Thyroid gland (tissue), 4 donors: ENCODE measurements at regions of chrX and their contacts with region 1.

Region 1: DNA sequence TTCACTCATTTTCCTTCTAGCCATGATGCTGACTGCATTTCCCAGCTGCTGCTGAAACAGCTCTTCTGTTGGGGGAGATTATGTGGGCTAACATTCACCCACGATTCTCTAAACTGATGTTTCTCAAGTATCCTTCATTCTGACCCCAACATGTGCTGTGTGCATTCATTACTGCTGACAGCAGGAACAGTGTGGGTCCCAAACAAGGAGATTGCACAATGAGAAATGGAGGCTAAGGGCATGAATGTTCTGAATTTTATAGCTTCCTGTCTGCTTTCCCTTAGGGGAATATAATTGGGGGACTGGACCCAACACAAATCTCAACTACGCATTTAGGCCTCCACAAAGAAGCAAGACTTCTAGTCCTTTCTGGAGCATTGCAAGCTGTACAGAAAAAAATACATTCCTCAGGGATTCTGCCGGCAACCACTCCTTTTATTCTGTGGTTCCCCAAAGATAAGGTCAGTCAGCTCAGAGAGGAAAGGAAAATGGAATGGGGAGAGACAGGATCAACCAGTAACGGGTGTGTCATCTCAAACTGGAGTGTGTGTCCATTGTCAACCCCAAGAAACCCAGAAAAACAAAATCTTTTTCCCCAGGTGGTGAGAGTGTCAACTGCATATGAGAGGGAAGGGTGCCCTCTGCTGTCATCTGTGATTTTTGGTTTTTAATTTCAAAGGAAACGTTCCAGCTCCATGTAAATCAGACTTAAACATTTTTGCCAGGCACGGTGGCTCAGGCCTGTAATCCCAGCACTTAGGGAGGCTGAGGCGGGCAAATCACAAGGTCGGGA is 81.5 kb upstream of the EGFL6 start:
- DNase-seq: peak; percentile 14 to 15
- H3K4me3 ChIP-seq: no peak overlapping the region
- H3K27ac ChIP-seq: peak overlapping the region in 2 of 3 donors; percentile 28 to 61
- H3K4me1 ChIP-seq: no peaks in the 10 kb centered on the region
- H3K27me3 ChIP-seq: no peaks in the 10 kb centered on the region
- CTCF ChIP-seq: peak in 5 of 6 experiments; percentile 23 to 91 (median 63)
- POLR2A ChIP-seq: no peak

Region 2: DNA sequence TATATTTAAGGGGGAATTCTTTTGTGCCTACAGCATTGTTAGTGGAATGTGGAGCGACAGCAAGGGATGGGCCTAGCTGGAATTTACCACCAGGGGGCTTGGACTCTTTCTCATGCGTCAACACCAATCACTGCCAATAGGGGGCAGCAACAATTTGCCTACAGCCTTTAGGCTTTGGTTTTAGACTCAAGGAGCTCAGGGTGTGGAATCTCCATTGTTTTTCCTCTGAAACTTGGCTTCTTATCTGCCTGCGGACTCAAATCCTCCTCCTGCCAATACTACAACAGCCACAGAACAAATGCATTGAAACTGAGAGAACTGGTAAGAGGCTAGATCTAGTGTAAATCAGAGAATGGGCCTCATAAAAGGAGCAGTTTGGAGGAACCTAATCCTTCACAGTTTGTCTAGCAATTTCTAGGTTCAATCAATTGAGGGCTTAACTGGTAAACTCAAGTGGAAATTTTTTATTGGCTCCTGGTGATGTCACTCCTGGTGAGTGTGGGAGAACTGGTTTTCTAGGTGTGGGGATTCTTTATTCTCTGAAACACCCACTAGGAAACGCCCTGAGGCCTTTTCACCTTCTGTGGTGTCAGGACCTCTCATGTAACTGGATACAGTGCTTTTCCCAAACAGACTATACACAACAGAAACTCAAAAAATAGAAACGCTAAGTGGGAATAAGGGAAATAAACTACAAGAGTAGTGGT is 540.9 kb before region 1 on chrX:
- intact Hi-C with region 1: loop called (anchors 5 kb)
- DNase-seq: peak; percentile 61 to 68
- H3K4me3 ChIP-seq: no peak overlapping the region
- H3K27ac ChIP-seq: peak overlapping the region in 1 of 3 donors; percentile 48
- H3K4me1 ChIP-seq: peaks cover 0 to 7% of the 10 kb centered on the region in 2 donors
- H3K27me3 ChIP-seq: no peaks in the 10 kb centered on the region
- CTCF ChIP-seq: peak; percentile 67 to 98 (median 86)
- POLR2A ChIP-seq: no peak

Region 3: GRCh38 chrX:12974796-12975669 is 512.9 kb before region 1 on chrX and contains the start of gene TMSB4X:
- intact Hi-C with region 1: loop called (anchors 10 kb)
- DNase-seq: peak; percentile 73 to 75
- H3K4me3 ChIP-seq: peak within 1 kb of the TSS; percentile 47 to 66 (median 59)
- H3K27ac ChIP-seq: peak within 1 kb of the TSS; percentile 79 to 92 (median 89)
- H3K4me1 ChIP-seq: no peaks in the 10 kb centered on the region
- H3K27me3 ChIP-seq: no peaks in the 10 kb centered on the region
- CTCF ChIP-seq: peak in 1 of 6 experiments; percentile 5
- POLR2A ChIP-seq: peak; percentile 66 to 94
- total RNA-seq, gene TMSB4X: 854 to 2,672 (median 1,302) TPM

Region 4: DNA sequence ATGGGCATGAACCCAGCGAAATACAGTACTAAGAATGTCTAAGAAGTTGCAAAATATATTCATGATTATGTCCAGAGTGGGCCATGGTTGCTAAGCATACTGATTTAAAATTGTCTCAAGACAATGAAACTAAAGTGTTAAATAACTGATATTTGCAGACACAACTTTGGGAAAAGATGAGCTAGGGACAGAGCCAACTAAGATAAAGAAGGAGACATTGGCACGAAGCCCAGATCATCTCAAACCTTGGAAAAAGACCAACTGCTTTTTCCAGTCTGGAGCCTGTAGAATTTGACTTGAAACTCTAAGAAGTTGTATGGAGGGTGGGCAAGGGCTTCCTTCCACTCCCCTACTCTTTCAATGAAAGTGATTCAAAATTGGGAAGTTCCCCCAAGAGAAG is 932.9 kb after region 1 on chrX:
- intact Hi-C with region 1: no loop called
- DNase-seq: no peak
- H3K4me3 ChIP-seq: no peak overlapping the region
- H3K27ac ChIP-seq: no peak overlapping the region
- H3K4me1 ChIP-seq: no peaks in the 10 kb centered on the region
- H3K27me3 ChIP-seq: no peaks in the 10 kb centered on the region
- CTCF ChIP-seq: no peak
- POLR2A ChIP-seq: no peak